Endothelial cell of umbilical vein (primary cell): ENCODE measurements at regions of chr6 and their contacts with region 1.

Region 1: GRCh38 chr6:150891888-150892485 is 26.5 kb downstream of the MTHFD1L start:
- DNase-seq: peak; percentile 90
- H3K4me3 ChIP-seq: no peak overlapping the region
- H3K27ac ChIP-seq: peak overlapping the region; percentile 8
- H3K4me1 ChIP-seq: peaks cover 2% of the 10 kb centered on the region
- H3K27me3 ChIP-seq: no peaks in the 10 kb centered on the region
- CTCF ChIP-seq: peak; percentile 78 to 82
- POLR2A ChIP-seq: no peak

Region 2: GRCh38 chr6:150902142-150902776 is 10.3 kb after region 1 on chr6:
- CTCF ChIA-PET with region 1: interaction called, 23 read pairs
- POLR2A ChIA-PET with region 1: interaction called, 4 read pairs
- dilution Hi-C with region 1: no loop called
- intact Hi-C with region 1: no loop called
- DNase-seq: no peak
- H3K4me3 ChIP-seq: no peak overlapping the region
- H3K27ac ChIP-seq: no peak overlapping the region
- H3K4me1 ChIP-seq: peaks cover 5% of the 10 kb centered on the region
- H3K27me3 ChIP-seq: no peaks in the 10 kb centered on the region
- CTCF ChIP-seq: no peak
- POLR2A ChIP-seq: no peak

Region 3: GRCh38 chr6:151004415-151005024 is 112.5 kb after region 1 on chr6:
- CTCF ChIA-PET with region 1: interaction called, 20 read pairs
- POLR2A ChIA-PET with region 1: interaction called, 3 read pairs
- dilution Hi-C with region 1: no loop called
- intact Hi-C with region 1: no loop called
- DNase-seq: peak; percentile 100
- H3K4me3 ChIP-seq: no peak overlapping the region
- H3K27ac ChIP-seq: peak overlapping the region; percentile 94
- H3K4me1 ChIP-seq: peaks cover 41% of the 10 kb centered on the region
- H3K27me3 ChIP-seq: no peaks in the 10 kb centered on the region
- CTCF ChIP-seq: no peak
- POLR2A ChIP-seq: peak; percentile 71

Region 4: DNA sequence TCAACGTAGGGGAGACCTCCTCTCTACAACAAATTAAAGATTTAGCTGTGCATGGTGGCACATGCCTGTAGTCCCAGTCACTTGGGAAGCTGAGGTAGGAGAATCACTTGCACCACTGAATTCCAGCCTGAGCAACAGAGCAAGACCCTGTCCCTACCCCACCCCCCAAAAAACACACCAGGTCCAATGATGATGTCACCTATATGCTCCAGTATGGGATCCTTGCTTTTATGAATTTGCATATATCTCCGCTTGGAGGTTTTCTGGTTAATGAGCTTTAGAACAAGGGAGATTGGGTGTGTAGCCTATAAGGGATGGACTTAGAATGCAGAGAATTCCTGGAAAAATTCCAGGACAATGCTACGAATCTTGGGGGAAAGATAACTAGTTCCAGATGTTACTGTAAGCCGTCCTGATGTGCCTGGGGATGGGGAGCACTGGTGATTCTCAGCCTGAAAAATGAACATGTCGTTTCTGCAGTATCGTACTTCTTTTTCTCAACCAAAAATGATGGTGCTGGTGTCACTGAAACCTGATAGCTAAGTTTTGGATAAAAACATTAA is 438.2 kb after region 1 on chr6:
- CTCF ChIA-PET with region 1: interaction called, 257 read pairs
- POLR2A ChIA-PET with region 1: interaction called, 3 read pairs
- dilution Hi-C with region 1: no loop called
- intact Hi-C with region 1: loop called (anchors 1 kb)
- DNase-seq: no peak
- H3K4me3 ChIP-seq: no peak overlapping the region
- H3K27ac ChIP-seq: no peak overlapping the region
- H3K4me1 ChIP-seq: peaks cover 9% of the 10 kb centered on the region
- H3K27me3 ChIP-seq: no peaks in the 10 kb centered on the region
- CTCF ChIP-seq: no peak
- POLR2A ChIP-seq: no peak

Region 5: DNA sequence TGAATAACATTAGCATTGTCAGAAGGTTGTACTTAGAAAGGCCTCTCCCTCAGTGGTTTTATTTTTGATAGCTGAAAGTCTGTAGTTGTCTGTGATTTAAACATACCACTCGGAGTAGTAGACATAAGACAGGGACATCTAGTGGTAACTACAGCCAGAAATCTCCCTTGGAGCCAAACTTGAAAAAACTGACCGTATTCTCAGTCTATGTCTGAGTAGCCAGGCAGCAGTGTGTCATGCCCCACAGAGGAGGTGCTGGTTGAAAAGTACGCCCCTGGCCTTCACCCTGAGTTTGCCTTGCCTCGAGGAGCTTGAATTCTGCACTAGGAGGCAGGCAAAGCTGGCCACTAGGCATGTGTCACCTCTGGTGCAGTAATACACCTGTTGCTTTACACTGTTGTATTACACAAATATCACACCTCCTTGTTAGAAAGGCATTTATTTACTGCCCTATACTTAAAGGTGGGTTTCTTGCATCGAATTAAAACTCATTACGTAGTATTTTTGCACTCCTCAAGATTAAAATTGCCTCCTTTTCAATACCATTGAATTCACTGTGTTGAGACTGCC is 478.6 kb after region 1 on chr6:
- CTCF ChIA-PET with region 1: interaction called, 23 read pairs
- POLR2A ChIA-PET with region 1: no interaction called
- dilution Hi-C with region 1: no loop called
- intact Hi-C with region 1: no loop called
- DNase-seq: peak; percentile 42
- H3K4me3 ChIP-seq: no peak overlapping the region
- H3K27ac ChIP-seq: no peak overlapping the region
- H3K4me1 ChIP-seq: peaks cover 25% of the 10 kb centered on the region
- H3K27me3 ChIP-seq: no peaks in the 10 kb centered on the region
- CTCF ChIP-seq: peak; percentile 9 to 21
- POLR2A ChIP-seq: no peak

Region 6: DNA sequence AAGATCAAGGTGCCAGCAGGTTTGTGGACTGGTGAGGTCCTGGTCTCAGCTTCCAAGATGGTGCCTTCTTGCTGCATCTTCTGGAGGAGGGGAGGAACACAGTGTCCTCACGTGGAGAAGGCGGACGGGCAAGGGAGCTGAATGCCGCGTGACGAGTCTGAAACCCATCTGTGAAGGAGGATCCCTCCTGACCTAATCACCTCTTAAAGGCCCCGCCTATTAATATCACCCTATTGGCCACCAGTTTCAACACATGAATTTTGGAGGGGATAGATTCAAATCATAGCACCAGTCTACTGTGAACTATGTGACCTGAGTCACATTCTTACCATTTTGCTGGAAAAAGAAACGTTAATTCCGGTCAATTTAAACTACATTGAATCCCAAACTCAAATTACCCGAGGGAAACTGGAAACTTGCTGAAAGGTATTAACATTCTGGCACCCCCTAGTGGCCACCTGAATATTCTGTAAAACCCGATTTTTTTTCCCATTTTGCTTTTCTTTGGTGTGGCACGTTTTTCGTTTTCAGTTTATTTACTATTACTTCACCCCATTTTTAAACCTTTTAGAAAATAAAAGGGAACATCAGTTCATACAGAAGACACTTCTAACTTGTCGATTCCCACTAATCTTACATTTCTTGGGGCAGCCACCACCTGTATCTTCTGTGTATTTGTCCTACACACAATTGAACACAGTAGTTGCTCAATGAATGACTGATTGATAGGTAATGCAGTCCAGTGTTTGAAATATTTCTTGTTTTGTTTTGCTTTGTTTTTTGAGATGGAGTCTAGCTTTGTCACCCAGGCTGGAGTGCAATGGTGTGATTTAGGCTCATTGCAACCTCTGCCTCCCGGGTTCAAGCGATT is 583.9 kb after region 1 on chr6:
- CTCF ChIA-PET with region 1: interaction called, 6 read pairs
- POLR2A ChIA-PET with region 1: no interaction called
- dilution Hi-C with region 1: no loop called
- intact Hi-C with region 1: loop called (anchors 10 kb)
- DNase-seq: peak; percentile 50
- H3K4me3 ChIP-seq: no peak overlapping the region
- H3K27ac ChIP-seq: no peak overlapping the region
- H3K4me1 ChIP-seq: peaks cover 2% of the 10 kb centered on the region
- H3K27me3 ChIP-seq: no peaks in the 10 kb centered on the region
- CTCF ChIP-seq: peak; percentile 53 to 62
- POLR2A ChIP-seq: no peak